BJ (cell line): ENCODE measurements at regions of chr11 and their contacts with region 1.

Region 1: DNA sequence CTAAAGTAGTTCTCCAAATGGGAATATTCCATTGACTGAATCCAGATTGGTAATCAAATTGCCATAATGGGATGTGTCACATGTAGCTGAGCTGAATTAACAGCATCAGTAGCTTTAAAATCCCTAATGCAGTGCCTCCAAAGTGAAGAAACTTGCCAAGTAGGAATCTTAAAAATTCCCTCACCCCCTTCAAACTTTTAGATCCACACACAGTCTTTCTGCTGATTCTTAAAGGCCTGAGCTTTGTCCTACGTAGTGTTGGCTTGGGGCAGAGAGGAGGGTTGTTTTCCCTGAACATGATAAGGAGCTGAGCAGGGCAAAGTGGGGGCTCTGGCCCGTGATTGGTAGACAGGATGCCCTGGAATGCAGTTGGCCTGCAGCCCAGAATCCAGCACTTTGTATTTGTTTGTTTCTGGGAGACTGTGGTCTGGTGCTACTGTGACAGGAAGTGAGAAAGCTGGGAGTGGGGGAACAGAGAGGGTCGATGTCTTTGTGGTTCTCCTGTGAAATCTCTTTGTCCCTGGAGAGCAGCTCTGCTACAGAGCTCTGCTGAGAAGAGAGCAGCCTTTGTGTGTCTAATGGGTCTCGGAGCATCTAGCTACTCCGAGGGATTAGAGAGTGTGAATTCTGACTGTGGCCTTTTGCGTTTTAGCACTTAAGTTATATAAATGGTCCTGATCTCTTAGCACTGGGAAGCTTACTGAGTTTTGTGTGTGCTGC is 16.9 kb downstream of the CTNND1 start:
- DNase-seq: peak; percentile 87
- H3K4me3 ChIP-seq: no peak overlapping the region
- H3K27me3 ChIP-seq: no peaks in the 10 kb centered on the region
- CTCF ChIP-seq: no peak

Region 2: DNA sequence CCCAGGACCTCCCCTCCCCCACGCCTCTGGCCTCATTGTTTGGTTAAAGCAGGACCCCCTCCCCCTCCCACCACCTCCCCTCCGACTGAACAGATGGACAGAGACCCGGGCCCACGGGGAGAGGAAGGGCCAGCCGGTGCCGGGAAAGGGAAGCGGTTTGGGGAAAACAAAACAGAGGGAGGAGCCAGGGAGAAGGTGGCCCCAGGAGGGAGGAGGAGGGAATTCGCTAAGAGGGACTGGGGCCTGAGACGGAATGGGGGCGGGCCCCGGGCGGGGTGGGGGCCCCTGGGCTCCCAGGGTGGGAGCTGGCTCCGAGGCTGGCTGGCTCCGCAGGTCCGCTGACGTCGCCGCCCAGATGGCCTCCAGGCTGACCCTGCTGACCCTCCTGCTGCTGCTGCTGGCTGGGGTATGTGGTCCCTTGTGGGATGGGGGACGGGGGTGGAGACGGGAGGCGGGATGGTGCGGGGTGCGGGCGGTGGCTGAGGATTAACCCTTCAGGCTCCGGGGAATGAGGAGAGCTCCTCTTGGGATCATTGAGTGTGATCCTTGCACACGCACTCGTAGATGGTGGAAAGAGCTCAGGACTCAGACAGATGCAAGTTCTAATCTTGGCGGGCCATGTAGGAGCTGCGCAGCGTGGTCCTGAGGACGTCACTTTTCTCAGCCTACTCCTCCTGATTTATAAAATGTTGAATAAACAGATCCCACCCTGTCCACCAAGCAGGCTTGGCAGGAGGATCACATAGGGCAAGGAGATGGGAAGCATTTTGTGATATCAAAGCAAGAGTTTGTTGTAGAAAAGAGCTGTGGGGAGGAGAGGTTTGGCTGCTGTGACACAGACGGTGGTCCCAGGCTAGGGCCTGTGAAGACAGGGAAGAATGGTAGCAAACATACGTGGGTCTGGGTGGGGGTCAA is 180.3 kb before region 1 on chr11:
- CTCF ChIA-PET with region 1: no interaction called
- POLR2A ChIA-PET with region 1: no interaction called
- DNase-seq: no peak
- H3K4me3 ChIP-seq: peak overlapping the region; percentile 60
- H3K27me3 ChIP-seq: 0 out of 2 replicates have a peak, but pooled peaks cover 3% of the 10 kb centered on the region
- CTCF ChIP-seq: no peak

Region 3: DNA sequence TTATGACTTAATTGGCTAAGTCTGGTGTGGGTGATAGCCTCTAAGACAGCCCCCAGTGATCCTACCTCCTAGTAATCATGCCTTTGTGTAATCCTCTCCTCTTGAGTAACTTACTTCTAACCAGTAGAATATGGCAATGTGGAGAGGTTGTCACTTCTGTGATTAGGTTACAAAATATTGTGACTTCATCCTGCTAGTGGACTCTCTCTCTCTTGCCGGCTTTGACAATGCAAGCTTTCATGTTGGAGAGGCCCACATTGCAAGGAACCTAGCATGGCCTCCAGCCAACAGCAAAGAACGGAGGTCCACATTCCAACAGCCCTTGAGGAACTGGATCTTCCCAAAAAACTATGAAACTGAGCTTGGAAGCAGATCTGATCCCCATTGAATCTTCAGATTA is 148.3 kb before region 1 on chr11:
- CTCF ChIA-PET with region 1: no interaction called
- POLR2A ChIA-PET with region 1: no interaction called
- DNase-seq: no peak
- H3K4me3 ChIP-seq: no peak overlapping the region
- H3K27me3 ChIP-seq: peaks cover 2% of the 10 kb centered on the region; the same call in 1 of the 2 replicates
- CTCF ChIP-seq: no peak

Region 4: DNA sequence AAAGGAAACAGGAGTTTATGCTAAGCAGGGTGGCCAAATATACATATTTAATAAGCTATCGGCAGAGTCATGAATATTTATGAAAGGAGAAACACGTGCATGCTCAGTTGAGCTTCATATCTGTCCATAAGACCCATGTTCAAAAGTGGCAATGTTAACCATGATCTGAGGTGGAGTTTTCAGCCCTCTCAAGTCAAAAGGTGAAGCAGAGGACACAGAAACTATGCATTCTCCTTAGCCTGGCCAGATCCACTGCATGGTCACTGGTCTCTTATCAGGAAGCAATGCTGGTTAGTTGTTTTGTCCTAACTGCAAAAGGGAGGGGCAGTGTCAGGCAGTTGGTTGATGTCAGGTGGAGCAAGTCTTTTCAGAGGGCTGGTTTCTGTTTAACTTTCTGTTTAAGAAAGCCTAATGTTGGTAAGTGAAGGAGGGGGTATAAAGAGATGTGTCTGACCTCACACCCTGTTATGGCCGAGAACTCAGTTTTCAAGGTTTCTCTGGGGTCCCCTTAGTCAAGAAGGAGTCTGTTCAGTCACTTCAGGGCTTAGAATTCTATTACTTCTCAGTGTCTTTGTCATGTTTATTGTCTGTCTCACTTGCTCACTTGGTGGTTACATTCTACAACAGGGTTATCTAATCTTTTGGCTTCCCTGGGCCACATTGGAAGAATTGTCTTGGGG is 42.7 kb before region 1 on chr11:
- CTCF ChIA-PET with region 1: no interaction called
- POLR2A ChIA-PET with region 1: interaction called, 13 read pairs
- DNase-seq: no peak
- H3K4me3 ChIP-seq: no peak overlapping the region
- H3K27me3 ChIP-seq: no peaks in the 10 kb centered on the region
- CTCF ChIP-seq: no peak

Region 5: GRCh38 chr11:57761301-57762234 is 16.9 kb before region 1 on chr11 and contains the start of gene CTNND1:
- CTCF ChIA-PET with region 1: interaction called, 12 read pairs
- POLR2A ChIA-PET with region 1: interaction called, 3 read pairs
- DNase-seq: peak; percentile 85
- H3K4me3 ChIP-seq: peak within 1 kb of the TSS; percentile 79
- H3K27me3 ChIP-seq: no peaks in the 10 kb centered on the region
- CTCF ChIP-seq: no peak
- polyA plus RNA-seq, gene CTNND1: 145 and 286 TPM in 2 replicates